CD4-positive, alpha-beta T cell (primary cell): ENCODE measurements at regions of chr14 and their contacts with region 1.

Region 1: DNA sequence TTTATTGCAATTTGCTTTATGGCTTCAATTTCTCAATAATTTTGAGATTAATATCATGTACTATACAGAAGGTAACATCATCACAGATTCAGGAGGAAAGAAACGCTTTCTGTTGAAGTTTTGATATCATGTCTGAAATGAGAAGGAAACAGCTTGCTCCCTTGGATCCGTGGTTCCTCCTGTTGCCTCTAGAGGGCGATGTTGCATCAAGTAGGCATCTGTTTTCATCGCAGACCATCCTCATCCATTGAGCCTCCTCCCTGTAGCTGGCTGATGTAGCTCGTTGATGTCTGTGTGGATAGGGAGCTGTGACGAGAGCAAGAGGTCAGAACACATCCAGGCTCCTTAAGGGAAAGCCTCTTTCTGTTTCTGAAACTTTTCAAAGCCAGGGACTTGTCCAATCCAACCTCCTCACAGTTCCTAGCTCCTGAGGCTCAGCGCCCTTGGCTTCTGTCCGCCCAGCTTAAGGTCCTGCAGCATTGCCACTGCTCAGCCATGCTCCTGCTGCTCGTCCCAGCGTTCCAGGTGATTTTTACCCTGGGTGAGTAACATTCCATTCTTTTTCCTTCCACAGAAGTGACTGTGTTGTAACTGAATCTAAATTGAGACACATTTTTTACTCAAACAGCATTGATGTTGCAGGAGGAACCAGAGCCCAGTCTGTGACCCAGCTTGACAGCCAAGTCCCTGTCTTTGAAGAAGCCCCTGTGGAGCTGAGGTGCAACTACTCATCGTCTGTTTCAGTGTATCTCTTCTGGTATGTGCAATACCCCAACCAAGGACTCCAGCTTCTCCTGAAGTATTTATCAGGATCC is 304.8 kb upstream of the OR4E1 start:
- DNase-seq: peak; percentile 24 to 81 (median 52)
- ATAC-seq: peak; percentile 82
- H3K4me3 ChIP-seq: peak overlapping the region; percentile 40
- H3K4me3 Mint-ChIP-seq: peak overlapping the region; percentile 67
- H3K27ac ChIP-seq: no peak overlapping the region
- H3K27ac Mint-ChIP-seq: peak overlapping the region; percentile 77
- H3K4me1 ChIP-seq: peaks cover 4% of the 10 kb centered on the region
- H3K4me1 Mint-ChIP-seq: peaks cover 50% of the 10 kb centered on the region
- H3K27me3 ChIP-seq: no peaks in the 10 kb centered on the region
- H3K27me3 Mint-ChIP-seq: no peaks in the 10 kb centered on the region
- CTCF ChIP-seq: peak; percentile 75

Region 2: DNA sequence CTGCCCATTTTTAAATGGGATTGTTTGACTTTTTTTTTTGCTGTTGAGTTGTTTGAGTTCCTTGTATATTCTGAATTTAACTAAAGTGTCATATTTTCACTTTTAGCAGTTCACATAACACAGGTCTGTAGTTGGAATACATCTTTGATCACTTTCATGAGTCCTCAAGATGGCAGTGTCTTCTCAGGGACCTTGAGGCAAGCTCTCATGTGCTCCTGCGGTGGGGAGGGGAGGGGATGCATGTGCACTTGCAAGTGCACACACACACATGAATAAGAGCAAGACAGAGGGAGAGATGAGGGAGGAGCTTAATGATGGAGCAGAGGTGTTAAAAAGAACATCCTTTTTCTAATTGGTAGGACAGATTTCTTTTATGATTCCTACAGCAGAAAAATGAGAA is 13.3 kb before region 1 on chr14:
- CTCF ChIA-PET with region 1: interaction called, 9 read pairs
- POLR2A ChIA-PET with region 1: interaction called, 11 read pairs
- intact Hi-C with region 1: no loop called
- DNase-seq: peak; percentile 14 to 85 (median 43)
- ATAC-seq: peak; percentile 96
- H3K4me3 ChIP-seq: peak overlapping the region; percentile 25
- H3K4me3 Mint-ChIP-seq: peak overlapping the region; percentile 74
- H3K27ac ChIP-seq: no peak overlapping the region
- H3K27ac Mint-ChIP-seq: peak overlapping the region; percentile 78
- H3K4me1 ChIP-seq: no peaks in the 10 kb centered on the region
- H3K4me1 Mint-ChIP-seq: peaks cover 29% of the 10 kb centered on the region
- H3K27me3 ChIP-seq: no peaks in the 10 kb centered on the region
- H3K27me3 Mint-ChIP-seq: no peaks in the 10 kb centered on the region
- CTCF ChIP-seq: no peak

Region 3: DNA sequence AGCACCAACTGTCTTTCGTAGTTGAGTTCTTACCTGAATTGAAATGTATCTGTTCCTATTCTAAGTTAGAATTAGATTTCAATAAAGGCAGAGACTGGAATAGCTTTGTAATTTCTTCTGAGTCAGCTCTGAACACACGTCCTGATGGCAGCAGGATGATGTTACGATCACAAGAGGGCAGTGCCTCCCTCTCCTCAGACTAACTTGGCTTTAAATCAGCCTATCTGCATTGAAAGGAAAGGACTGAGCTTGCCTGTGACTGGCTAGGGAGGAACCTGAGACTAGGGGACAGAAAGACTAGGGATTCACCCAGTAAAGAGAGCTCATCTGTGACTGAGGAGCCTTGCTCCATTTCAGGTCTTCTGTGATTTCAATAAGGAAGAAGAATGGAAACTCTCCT is 18.9 kb after region 1 on chr14:
- CTCF ChIA-PET with region 1: interaction called, 12 read pairs
- POLR2A ChIA-PET with region 1: interaction called, 6 read pairs
- intact Hi-C with region 1: no loop called
- DNase-seq: peak in 7 of 14 experiments; percentile 16 to 77 (median 47)
- ATAC-seq: peak; percentile 90
- H3K4me3 ChIP-seq: peak overlapping the region; percentile 56
- H3K4me3 Mint-ChIP-seq: peak overlapping the region; percentile 95
- H3K27ac ChIP-seq: no peak overlapping the region
- H3K27ac Mint-ChIP-seq: peak overlapping the region; percentile 88
- H3K4me1 ChIP-seq: peaks cover under 1% of the 10 kb centered on the region
- H3K4me1 Mint-ChIP-seq: peaks cover 27% of the 10 kb centered on the region
- H3K27me3 ChIP-seq: no peaks in the 10 kb centered on the region
- H3K27me3 Mint-ChIP-seq: no peaks in the 10 kb centered on the region
- CTCF ChIP-seq: no peak

Region 4: GRCh38 chr14:22002860-22003309 is 24.5 kb after region 1 on chr14:
- CTCF ChIA-PET with region 1: interaction called, 12 read pairs
- POLR2A ChIA-PET with region 1: interaction called, 5 read pairs
- intact Hi-C with region 1: no loop called
- DNase-seq: peak; percentile 45 to 86 (median 64)
- ATAC-seq: peak; percentile 77
- H3K4me3 ChIP-seq: peak overlapping the region; percentile 44
- H3K4me3 Mint-ChIP-seq: peak overlapping the region; percentile 88
- H3K27ac ChIP-seq: peak overlapping the region; percentile 44 to 56
- H3K27ac Mint-ChIP-seq: peak overlapping the region; percentile 93
- H3K4me1 ChIP-seq: peaks cover 7% of the 10 kb centered on the region
- H3K4me1 Mint-ChIP-seq: peaks cover 29% of the 10 kb centered on the region
- H3K27me3 ChIP-seq: no peaks in the 10 kb centered on the region
- H3K27me3 Mint-ChIP-seq: no peaks in the 10 kb centered on the region
- CTCF ChIP-seq: peak; percentile 60